Gastrocnemius medialis (tissue), 4 donors: ENCODE measurements at regions of chr1 and their contacts with region 1.

Region 1: DNA sequence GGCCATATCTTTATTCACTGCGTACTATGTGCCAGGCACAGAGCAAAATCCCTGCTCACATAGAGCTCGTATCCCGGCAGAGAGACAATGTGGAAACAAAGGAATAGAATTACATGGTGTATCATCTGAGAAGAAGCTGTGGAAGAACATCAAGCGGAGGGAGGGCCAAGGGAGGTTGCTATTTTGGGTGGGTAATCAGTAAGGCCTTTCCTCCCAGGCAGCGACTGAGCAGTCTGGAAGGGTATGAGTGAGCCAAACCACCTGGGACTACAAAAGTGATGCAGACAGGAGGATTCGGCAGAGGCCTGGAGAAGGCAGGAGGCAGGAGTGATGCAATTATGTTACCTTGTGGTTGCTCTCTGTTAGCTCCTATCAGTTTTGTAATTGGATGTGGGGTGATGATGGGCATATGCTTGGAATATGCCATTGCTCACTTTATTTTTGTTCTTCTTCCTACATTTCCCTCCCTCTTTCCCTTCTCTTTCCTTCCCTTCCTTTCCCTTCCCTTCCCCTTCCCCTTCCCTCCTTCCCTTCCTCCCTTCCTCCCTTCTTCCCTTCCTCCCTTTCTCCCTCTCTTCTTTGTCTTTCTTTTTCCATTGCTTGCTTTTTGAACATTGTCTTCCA is 172.9 kb downstream of the DISC1 start:
- DNase-seq: peak; percentile 12 to 88
- ATAC-seq: peak; percentile 58 to 86
- H3K4me3 ChIP-seq: no peak overlapping the region
- H3K27ac ChIP-seq: peak overlapping the region; percentile 2 to 69 (median 52)
- H3K4me1 ChIP-seq: peaks cover 6 to 15% of the 10 kb centered on the region in 2 donors
- H3K27me3 ChIP-seq: no peaks in the 10 kb centered on the region
- CTCF ChIP-seq: no peak
- POLR2A ChIP-seq: no peak

Region 2: GRCh38 chr1:231424950-231425805 is 374.3 kb before region 1 on chr1:
- in situ Hi-C with region 1: no loop called
- intact Hi-C with region 1: no loop called
- DNase-seq: peak; percentile 91 to 94
- ATAC-seq: peak; percentile 65 to 66
- H3K4me3 ChIP-seq: peak overlapping the region in 3 of 4 donors; percentile 8 to 30 (median 12)
- H3K27ac ChIP-seq: peak overlapping the region; percentile 97 to 98 (median 98)
- H3K4me1 ChIP-seq: peaks cover 30 to 38% of the 10 kb centered on the region in 2 donors
- H3K27me3 ChIP-seq: no peaks in the 10 kb centered on the region
- CTCF ChIP-seq: no peak
- POLR2A ChIP-seq: peak in 1 of 2 donors; percentile 63

Region 3: DNA sequence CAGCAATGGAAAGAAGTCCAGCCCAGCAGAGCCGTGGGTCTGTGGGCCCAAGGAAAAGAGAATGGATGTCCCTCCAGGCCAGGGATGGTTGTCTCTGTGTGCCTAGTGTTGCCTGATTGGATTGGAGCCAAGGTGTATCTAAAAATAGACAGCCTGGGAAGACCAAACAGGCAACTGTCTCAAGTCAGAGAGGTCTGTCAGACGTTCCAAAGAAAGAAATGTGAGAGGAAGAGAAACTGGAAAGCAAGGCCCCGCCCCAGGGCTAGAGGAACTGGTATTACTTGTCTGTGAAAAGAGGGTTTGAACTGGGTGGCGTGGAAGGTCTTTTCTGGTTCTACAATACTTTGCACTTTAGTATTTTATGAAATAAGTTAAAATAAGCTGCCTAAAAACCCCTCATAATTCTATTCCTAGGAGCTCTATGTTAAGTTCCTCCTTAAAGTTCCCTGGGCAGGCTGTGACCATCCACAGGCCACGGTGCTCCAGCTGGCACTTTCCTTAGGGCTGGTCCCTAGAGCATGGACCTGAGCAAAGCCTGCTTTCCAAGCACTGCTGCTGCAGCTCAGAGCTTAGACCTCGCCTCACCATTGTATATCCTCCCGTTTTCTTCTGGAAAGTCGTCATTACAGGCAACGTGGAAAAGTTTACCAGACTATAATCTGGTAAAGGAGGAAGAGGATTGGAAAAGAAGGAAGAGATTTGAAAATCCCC is 21.3 kb before region 1 on chr1:
- in situ Hi-C with region 1: no loop called
- intact Hi-C with region 1: loop called (anchors 1 kb)
- DNase-seq: peak; percentile 44 to 74
- ATAC-seq: peak; percentile 92 to 98
- H3K4me3 ChIP-seq: no peak overlapping the region
- H3K27ac ChIP-seq: peak overlapping the region; percentile 48 to 71 (median 58)
- H3K4me1 ChIP-seq: peaks cover 16 to 27% of the 10 kb centered on the region in 2 donors
- H3K27me3 ChIP-seq: no peaks in the 10 kb centered on the region
- CTCF ChIP-seq: no peak
- POLR2A ChIP-seq: no peak

Region 4: GRCh38 chr1:231818337-231818736 is 18.9 kb after region 1 on chr1:
- in situ Hi-C with region 1: no loop called
- intact Hi-C with region 1: loop called (anchors 1 kb)
- DNase-seq: peak; percentile 40 to 74
- ATAC-seq: peak; percentile 80 to 92
- H3K4me3 ChIP-seq: peak overlapping the region in 3 of 4 donors; percentile 4 to 34 (median 11)
- H3K27ac ChIP-seq: peak overlapping the region; percentile 53 to 79 (median 64)
- H3K4me1 ChIP-seq: peaks cover 4% of the 10 kb centered on the region in 2 donors
- H3K27me3 ChIP-seq: no peaks in the 10 kb centered on the region
- CTCF ChIP-seq: no peak
- POLR2A ChIP-seq: peak in 1 of 2 donors; percentile 52